Calu3 (cell line): ENCODE measurements at regions of chr6 and their contacts with region 1.

Region 1: GRCh38 chr6:73610444-73611275 is 43.1 kb downstream of the SLC17A5 start:
- DNase-seq: peak; percentile 10
- H3K4me3 Mint-ChIP-seq: no peak overlapping the region
- H3K27ac Mint-ChIP-seq: peak overlapping the region; percentile 33
- H3K4me1 Mint-ChIP-seq: peaks cover 15% of the 10 kb centered on the region
- H3K27me3 Mint-ChIP-seq: no peaks in the 10 kb centered on the region
- CTCF ChIP-seq: no peak

Region 2: GRCh38 chr6:73461537-73462350 is 148.9 kb before region 1 on chr6 and contains the start of gene MTO1:
- CTCF ChIA-PET with region 1: interaction called, 5 read pairs
- intact Hi-C with region 1: loop called (anchors 5 kb)
- DNase-seq: peak; percentile 77
- H3K4me3 Mint-ChIP-seq: peak within 1 kb of the TSS; percentile 92
- H3K27ac Mint-ChIP-seq: peak within 1 kb of the TSS; percentile 97
- H3K4me1 Mint-ChIP-seq: no peaks in the 10 kb centered on the region
- H3K27me3 Mint-ChIP-seq: no peaks in the 10 kb centered on the region
- CTCF ChIP-seq: no peak
- total RNA-seq, gene MTO1: 31.6 and 35.6 TPM in 2 replicates

Region 3: DNA sequence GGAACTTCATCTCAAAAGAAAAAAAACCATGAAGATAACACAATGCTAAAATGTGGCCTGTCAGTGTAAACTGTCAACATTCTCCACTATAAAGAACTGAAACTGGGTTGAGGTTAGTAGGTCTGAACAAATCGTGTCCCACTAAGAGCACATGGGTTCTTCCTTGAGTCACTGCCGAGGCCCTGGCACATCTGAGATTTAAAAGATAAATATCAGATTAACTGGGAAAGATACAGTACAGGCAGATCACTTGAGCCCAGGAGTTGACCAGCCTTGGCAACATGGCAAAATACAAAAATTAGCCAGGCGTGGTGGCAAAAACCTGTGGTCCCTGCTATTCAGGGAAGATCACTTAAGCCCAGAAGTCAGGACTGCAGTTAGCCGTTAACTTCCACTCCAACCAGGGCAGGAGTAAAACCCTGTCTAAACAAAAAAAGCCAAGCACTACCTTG is 95.4 kb before region 1 on chr6:
- CTCF ChIA-PET with region 1: interaction called, 4 read pairs
- intact Hi-C with region 1: loop called (anchors 1 kb)
- DNase-seq: no peak
- H3K4me3 Mint-ChIP-seq: peak overlapping the region; percentile 68
- H3K27ac Mint-ChIP-seq: peak overlapping the region; percentile 29
- H3K4me1 Mint-ChIP-seq: peaks cover 14% of the 10 kb centered on the region
- H3K27me3 Mint-ChIP-seq: peaks cover 7% of the 10 kb centered on the region
- CTCF ChIP-seq: no peak

Region 4: DNA sequence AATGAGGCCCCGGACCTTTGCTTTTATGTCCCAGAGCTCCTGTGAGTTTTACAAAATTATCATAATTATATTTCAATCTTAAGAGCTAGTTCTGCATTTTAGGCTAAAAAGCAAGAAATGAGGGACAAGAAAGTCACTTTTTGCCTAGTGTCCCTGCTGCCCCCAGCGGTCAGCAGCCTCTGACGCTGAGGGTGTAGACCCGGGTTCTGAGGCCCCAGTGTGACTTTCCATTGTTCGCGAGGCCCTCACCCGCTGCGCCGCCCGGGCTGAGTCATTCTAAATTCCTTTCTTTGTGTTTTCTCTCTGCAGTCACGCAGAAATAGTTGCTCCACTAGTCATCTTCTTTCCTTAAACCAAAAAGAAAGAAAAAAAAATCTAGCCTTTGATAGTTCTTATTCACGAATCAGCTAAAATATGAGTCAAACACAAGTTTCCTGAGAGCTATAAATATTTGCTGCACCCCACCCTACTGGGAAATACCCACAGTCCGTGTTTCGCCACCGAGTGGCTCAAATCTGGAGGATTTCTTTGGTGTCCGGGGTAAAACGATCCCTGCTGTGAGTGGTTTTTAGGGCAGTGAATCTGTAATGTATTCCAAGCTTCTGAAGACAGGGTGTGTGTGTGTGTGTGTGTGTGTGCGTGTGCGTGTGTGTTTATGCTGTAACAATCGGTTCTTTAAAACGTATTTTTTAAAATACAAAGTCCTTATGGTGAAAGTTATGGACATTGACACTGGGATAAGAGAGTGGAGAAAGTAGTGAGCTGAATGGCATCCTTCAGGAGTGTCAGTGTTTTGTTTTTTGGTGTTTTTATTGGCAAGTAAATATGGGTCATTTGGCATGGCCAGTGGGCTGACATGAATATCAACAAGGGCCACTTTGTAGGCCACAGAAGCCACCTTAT is 30.2 kb before region 1 on chr6:
- CTCF ChIA-PET with region 1: interaction called, 3 read pairs
- intact Hi-C with region 1: loop called (anchors 1 kb)
- DNase-seq: peak; percentile 94
- H3K4me3 Mint-ChIP-seq: peak overlapping the region; percentile 67
- H3K27ac Mint-ChIP-seq: peak overlapping the region; percentile 98
- H3K4me1 Mint-ChIP-seq: peaks cover 20% of the 10 kb centered on the region
- H3K27me3 Mint-ChIP-seq: no peaks in the 10 kb centered on the region
- CTCF ChIP-seq: peak; percentile 16